ENCODE measurements at regions of chr18 and their contacts with region 1.

Region 1: DNA sequence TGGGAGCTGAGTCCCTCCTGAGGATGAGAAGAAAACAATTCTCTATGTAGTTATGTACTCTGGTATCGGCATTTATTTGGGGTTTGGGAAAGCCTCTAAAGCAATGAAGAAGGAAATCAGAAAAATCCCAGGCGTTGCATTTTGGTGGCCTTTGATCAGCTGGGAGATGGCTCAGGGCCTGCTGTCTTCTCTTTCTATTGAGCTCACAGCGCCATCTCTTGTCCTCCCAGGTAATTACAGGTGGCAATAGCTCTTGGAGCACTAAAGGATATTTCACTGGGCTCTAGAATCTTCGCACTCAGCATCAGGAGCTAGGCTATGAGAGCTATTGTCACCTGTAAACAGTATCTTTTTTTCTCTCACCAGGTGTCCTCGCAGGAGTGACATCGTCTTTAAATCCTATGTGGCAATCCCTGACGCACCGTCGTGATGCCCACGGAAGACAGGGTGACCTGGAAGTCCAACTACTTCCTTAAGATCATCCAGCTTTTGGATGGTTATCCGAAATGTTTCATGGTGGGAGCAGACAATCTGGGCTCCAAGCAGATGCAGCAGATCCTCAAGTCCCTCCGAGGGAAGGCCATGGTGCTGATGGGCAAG is 76.1 kb upstream of the PMAIP1 start:
- DNase-seq: no peak
- ATAC-seq: peak; percentile 92
- H3K4me3 ChIP-seq: no peak overlapping the region
- H3K27ac ChIP-seq: no peak overlapping the region
- H3K4me1 ChIP-seq: no peaks in the 10 kb centered on the region
- H3K27me3 ChIP-seq: no peaks in the 10 kb centered on the region
- CTCF ChIP-seq: peak; percentile 80 to 87 (median 86)
- EP300 ChIP-seq: no peak
- POLR2A ChIP-seq: no peak
- RAD21 ChIP-seq: peak; percentile 91

Region 2: DNA sequence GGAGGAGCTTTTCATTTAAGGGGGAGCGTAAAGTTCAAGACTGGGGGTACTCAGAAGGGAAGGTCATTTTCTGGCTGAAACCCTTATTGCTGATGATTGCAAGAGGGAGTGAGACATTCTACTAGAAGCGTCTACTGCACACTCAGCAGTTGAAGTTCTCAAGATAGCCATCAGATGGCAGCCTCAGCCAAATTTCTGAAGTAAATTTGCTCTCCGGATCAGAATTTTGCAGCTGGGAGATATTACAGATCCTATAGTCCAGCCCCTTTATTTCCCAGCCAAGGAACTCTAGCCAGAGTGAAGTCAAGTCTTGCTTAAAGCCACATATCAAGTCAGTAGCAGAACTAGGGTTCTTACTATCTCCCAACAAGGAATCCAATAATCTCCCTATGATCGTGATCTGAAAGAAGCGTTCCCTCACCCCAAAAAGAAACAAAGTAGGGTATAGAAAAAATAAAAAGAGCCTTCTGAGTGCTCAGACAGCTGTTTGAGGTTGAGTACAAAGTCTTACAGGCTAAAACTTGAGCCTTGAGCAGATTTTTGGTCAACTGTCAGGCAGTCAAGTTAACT is 574.4 kb before region 1 on chr18:
- CTCF ChIA-PET with region 1: interaction called, 18 read pairs
- POLR2A ChIA-PET with region 1: no interaction called
- RAD21 ChIA-PET with region 1: interaction called, 8 read pairs
- SMC1A ChIA-PET with region 1: interaction called, 3 read pairs
- in situ Hi-C with region 1: no loop called
- intact Hi-C with region 1: loop called (anchors 10 kb)
- DNase-seq: no peak
- ATAC-seq: peak; percentile 73
- H3K4me3 ChIP-seq: no peak overlapping the region
- H3K27ac ChIP-seq: no peak overlapping the region
- H3K4me1 ChIP-seq: no peaks in the 10 kb centered on the region
- H3K27me3 ChIP-seq: peaks cover 0 to under 1% of the 10 kb centered on the region in 2 experiments; a peak in 1 of 4 replicates
- CTCF ChIP-seq: peak; percentile 69 to 74 (median 73)
- EP300 ChIP-seq: no peak
- POLR2A ChIP-seq: no peak
- RAD21 ChIP-seq: peak; percentile 70

Region 3: DNA sequence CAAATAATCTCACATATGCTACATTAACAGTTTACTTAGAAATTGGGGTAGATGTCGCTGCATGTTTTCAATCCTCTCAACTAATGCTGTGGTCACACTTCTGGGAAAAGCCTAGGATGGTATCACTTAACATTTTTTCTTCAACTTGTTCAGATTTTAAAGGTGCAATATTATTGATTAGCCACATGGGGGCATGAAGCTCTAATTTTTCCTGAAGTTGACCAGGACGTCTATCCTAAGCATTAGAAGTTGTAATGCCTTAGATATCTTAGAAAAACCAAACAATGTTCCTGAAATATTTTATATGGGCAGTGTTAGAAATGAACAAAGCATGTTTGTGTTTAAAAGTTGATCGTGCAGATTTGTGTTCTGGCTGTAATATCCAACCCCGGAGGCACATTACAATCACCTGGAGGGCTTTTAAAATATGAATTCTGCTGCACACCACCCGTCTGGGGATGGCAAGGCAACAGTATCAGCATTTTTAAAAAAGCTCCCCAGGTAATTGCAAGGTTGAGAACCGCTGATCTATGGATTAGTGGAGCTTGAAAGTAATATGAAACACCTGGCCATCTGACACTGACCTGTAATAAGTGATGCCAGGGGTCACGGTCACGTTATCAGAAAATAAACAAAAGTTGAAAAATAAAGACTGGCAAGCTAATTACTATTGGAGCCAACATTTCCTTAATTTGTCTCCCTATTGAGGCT is 364.2 kb before region 1 on chr18:
- CTCF ChIA-PET with region 1: interaction called, 158 read pairs
- POLR2A ChIA-PET with region 1: no interaction called
- RAD21 ChIA-PET with region 1: interaction called, 50 read pairs
- SMC1A ChIA-PET with region 1: interaction called, 62 read pairs
- in situ Hi-C with region 1: loop called (anchors 5 kb)
- intact Hi-C with region 1: loop called (anchors 1 kb)
- DNase-seq: no peak
- ATAC-seq: peak; percentile 48; the same call in 2 of the 3 replicates
- H3K4me3 ChIP-seq: no peak overlapping the region
- H3K27ac ChIP-seq: no peak overlapping the region
- H3K4me1 ChIP-seq: no peaks in the 10 kb centered on the region
- H3K27me3 ChIP-seq: peaks cover 4 to 9% of the 10 kb centered on the region in 2 experiments; a peak in 3 of 4 replicates
- CTCF ChIP-seq: peak; percentile 53 to 58 (median 55)
- EP300 ChIP-seq: no peak
- POLR2A ChIP-seq: no peak
- RAD21 ChIP-seq: peak; percentile 66

Region 4: DNA sequence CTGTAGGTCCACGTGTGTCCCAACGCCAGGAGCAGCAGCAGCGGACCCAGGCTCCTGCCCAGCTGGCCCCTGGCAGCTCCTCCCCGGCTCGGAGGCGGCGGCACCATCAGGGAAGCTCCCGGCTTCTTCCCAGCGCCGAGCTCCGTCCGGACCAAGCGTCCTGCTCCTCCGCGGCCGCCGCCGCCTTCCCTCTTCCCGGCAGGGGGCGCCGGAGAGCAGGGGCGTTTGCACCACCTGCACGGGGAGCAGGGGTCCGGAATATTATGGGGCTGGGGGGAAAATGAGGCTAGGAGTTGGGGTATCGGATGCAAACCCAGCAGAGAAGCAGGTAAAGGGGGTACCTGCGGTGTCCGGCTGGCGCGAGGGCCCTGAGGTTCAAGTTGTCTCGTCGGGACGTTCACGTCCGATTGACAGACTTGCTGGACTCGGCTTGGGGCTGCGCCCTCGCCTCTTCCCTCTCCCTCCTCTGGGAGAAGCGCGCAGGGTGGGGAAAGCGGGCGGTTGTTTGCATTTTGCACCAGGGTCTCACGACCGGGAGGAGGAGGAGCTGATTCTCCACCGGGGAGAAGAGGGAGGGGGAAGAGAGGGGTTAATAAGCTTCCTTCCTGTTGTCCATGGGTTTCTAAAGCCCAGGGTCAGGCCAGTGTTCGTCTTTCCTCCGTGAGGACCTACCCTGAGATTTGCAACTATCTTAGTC is 126.3 kb before region 1 on chr18 and contains the start of gene CCBE1:
- CTCF ChIA-PET with region 1: interaction called, 32 read pairs
- POLR2A ChIA-PET with region 1: no interaction called
- RAD21 ChIA-PET with region 1: interaction called, 13 read pairs
- SMC1A ChIA-PET with region 1: interaction called, 10 read pairs
- in situ Hi-C with region 1: no loop called
- intact Hi-C with region 1: loop called (anchors 5 kb)
- DNase-seq: no peak
- ATAC-seq: peak; percentile 79
- H3K4me3 ChIP-seq: 0 out of 2 replicates have a peak within 1 kb of the TSS, but pooled peaks have one; percentile 9
- H3K27ac ChIP-seq: no peak within 1 kb of the TSS
- H3K4me1 ChIP-seq: no peaks in the 10 kb centered on the region
- H3K27me3 ChIP-seq: peaks cover 2 to 6% of the 10 kb centered on the region in 2 experiments
- CTCF ChIP-seq: peak; percentile 47 to 80 (median 66)
- EP300 ChIP-seq: no peak
- POLR2A ChIP-seq: no peak
- RAD21 ChIP-seq: peak; percentile 38; the same call in 1 of the 2 replicates
- polyA plus RNA-seq, gene CCBE1: not detected

Region 5: DNA sequence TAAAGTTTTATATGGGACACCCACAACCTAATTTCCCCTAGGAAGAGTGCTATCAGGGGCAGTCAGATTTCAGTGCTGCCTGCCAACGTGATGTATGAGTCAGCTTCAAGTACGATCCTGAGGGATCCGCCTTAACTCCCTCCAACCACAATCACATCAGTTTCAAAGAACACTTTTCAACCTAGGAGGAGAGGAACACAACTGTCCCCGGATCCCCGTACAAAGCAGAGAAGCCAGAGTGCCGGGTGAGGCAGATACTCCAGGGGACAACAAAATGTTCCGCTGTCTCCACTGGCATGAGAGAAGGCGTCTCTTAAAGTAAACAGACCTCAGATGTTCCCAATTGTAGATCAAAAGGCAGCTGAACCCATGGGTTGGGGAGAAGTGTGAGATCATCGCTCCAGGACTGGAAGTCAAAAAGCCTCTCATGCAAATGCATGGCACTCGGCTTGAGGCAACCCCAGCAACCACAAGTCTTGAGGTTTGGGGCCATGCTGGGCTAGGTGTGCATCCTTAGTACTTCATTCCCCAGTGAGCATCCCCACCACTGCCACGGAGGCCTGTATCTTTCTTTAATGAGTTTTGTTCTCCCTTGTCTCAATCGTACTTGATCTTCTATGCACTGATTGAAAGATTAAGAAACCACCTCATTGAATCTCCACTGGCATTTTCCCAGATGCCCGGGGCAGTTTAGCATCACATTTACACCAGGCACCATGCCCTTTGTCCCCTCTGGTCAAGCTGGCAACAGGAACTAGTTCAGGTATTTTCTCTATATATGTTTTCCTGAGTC is 35.5 kb before region 1 on chr18:
- CTCF ChIA-PET with region 1: interaction called, 135 read pairs
- POLR2A ChIA-PET with region 1: no interaction called
- RAD21 ChIA-PET with region 1: interaction called, 89 read pairs
- SMC1A ChIA-PET with region 1: interaction called, 83 read pairs
- in situ Hi-C with region 1: no loop called
- intact Hi-C with region 1: loop called (anchors 1 kb)
- DNase-seq: no peak
- ATAC-seq: 0 out of 3 replicates have a peak, but pooled peaks have one; percentile 14
- H3K4me3 ChIP-seq: no peak overlapping the region
- H3K27ac ChIP-seq: no peak overlapping the region
- H3K4me1 ChIP-seq: no peaks in the 10 kb centered on the region
- H3K27me3 ChIP-seq: no peaks in the 10 kb centered on the region
- CTCF ChIP-seq: no peak
- EP300 ChIP-seq: no peak
- POLR2A ChIP-seq: no peak
- RAD21 ChIP-seq: no peak

Region 6: DNA sequence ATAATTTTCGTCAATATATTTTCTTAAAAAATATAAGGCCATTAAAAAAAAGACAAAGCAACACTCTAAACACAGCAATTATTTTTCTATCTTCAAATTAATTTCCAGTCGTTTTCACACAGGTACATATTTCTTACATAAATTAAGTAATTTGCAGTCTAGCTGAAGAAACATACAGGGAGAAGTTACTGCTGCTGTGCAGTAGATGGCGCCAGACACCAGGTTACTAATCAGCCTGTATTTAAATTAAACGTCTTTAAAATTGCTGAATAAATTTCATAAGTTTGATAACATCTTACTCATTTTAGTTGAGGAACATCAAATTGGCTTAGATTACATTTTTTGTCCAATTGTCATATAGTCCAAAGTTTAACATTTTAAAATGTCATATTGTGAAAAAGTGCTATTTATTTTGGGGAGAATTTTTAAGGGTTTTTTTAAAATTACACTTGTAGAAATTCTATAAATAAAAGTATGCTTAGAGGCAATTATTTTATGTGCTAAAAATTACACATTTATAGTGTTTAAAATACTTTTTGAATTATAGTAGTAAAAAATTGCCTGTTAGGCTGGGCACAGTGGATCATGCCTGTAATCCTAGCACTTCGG is 164.5 kb after region 1 on chr18:
- CTCF ChIA-PET with region 1: interaction called, 20 read pairs
- POLR2A ChIA-PET with region 1: no interaction called
- RAD21 ChIA-PET with region 1: interaction called, 13 read pairs
- SMC1A ChIA-PET with region 1: interaction called, 6 read pairs
- in situ Hi-C with region 1: no loop called
- intact Hi-C with region 1: no loop called
- DNase-seq: no peak
- ATAC-seq: peak; percentile 81
- H3K4me3 ChIP-seq: no peak overlapping the region
- H3K27ac ChIP-seq: no peak overlapping the region
- H3K4me1 ChIP-seq: no peaks in the 10 kb centered on the region
- H3K27me3 ChIP-seq: no peaks in the 10 kb centered on the region
- CTCF ChIP-seq: peak; percentile 83 to 90 (median 87)
- EP300 ChIP-seq: no peak
- POLR2A ChIP-seq: no peak
- RAD21 ChIP-seq: peak; percentile 96

Measured in GM12878 (cell line).